ENCODE measurements at regions of chr1 and their contacts with region 1.

Region 1: DNA sequence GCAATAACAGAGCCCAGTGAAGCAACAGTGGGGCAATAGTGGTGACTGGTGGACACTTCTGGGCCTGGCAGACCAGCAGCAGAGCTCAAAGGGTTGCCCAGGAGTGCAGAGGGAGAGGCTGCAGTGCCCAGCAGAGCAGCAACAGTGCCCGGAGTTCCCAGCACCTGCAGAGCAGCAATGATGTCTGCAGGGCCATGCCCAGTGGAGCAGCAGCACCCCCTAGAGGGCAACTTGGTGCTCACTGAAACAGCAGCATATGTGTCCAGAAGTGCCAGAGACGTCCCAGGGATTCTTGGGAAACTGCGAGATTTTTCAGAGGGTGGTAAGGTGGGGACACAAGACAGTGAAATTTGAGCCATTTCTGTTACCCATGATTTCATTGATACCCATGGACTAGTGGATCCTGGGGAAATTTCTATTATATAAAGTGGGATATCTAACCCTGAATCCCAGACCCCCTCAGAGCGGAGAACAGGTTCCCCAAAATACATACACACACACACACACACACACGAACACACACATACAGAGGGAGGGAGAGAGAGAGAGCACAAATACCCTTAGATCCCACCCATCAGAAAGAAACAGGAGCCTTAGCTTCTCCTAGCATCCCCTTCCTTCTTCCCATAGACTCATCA is 156.9 kb upstream of the GJB5 start:
- DNase-seq: peak; percentile 92
- H3K4me3 Mint-ChIP-seq: no peak overlapping the region
- H3K27ac Mint-ChIP-seq: no peak overlapping the region
- H3K4me1 Mint-ChIP-seq: no peaks in the 10 kb centered on the region
- H3K27me3 Mint-ChIP-seq: peaks cover 72% of the 10 kb centered on the region
- CTCF ChIP-seq: peak; percentile 89

Region 2: DNA sequence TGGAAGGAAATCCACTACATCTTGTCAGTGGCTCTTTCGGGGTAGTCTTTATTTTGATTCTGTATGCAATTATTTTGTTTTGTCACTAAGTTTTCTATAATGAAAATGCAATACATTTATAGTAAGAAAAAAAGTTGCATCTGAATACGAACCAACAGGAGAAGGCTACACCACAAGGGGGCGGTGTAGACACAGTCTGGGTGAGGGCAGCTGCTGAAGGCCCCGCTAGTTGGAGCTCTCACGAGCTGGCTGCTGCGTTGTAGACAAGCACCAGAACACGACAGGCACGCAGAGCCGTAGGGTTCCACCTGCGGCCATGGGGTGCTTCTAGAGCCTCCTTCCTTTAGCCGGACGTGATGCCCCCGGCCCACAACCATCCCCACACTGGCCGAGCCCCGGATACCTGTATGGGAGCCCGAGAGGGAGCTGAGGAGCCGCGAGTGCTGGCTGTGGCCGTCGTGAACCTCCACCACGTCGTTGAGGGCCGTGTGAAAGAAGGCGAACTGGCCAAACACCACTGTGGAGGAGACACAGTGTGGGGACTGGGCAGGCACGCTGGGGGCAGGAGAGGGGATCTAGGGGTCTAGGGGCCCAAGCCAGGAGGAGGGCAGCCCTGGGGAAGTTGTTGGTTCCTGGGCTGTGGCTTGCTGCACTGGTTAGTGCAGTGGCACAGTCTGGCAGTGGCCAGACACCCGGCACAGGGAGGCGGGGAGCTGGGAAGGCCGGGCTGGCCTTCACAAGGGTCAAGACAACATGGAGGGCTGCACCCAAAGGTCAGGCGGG is 964.8 kb before region 1 on chr1:
- CTCF ChIA-PET with region 1: interaction called, 3 read pairs
- intact Hi-C with region 1: loop called (anchors 2 kb)
- DNase-seq: peak; percentile 93
- H3K4me3 Mint-ChIP-seq: peak overlapping the region; percentile 38
- H3K27ac Mint-ChIP-seq: no peak overlapping the region
- H3K4me1 Mint-ChIP-seq: no peaks in the 10 kb centered on the region
- H3K27me3 Mint-ChIP-seq: peaks cover 84% of the 10 kb centered on the region
- CTCF ChIP-seq: peak; percentile 92

Region 3: GRCh38 chr1:34113887-34114286 is 484.1 kb before region 1 on chr1:
- CTCF ChIA-PET with region 1: no interaction called
- intact Hi-C with region 1: loop called (anchors 5 kb)
- DNase-seq: peak; percentile 4
- H3K4me3 Mint-ChIP-seq: no peak overlapping the region
- H3K27ac Mint-ChIP-seq: no peak overlapping the region
- H3K4me1 Mint-ChIP-seq: no peaks in the 10 kb centered on the region
- H3K27me3 Mint-ChIP-seq: no peaks in the 10 kb centered on the region
- CTCF ChIP-seq: no peak

Region 4: DNA sequence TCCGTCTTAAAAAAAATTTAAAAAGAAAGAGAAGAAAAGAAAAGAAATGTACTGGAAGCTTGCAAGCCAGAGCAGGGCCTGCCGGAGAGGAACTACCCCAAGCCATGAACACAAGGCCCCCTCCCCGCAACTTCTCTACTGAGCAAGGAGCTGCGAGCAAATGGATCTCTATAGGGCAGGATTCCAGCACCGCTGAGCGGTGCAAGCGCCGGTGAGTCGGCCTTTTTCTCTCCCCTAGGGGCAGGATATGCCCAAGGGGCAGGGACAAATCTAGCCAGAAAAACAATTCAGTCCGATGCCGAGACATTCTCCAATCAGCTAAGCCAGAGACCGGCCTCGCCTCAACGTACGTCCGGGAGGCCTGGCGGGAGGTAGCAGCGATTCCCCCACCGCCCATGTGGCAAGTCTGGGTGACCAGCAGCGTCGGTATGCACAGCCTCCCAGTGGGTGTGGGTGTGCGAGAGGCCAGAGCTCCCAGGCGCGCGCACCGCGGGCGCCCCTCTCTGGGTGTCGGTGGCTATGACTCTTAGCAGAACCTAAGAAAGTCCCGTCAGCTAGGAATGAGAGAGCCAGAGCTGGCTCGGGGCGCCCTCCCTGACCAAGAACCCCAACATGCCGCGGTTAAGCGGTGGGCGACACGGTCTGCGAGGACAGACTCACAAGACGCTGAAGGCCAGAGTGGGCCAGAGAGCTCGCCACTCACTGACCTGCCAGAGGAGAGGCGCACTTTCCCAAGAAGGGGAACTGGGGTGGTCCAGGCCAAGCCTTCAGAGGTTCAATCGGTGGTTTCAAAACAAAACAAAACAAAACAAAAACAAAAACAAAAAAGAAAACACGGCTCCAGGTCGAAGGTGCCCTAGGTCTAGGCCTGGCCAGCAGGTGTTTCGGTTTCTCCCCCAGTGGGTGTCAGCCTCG is 434.9 kb before region 1 on chr1:
- CTCF ChIA-PET with region 1: no interaction called
- intact Hi-C with region 1: loop called (anchors 2 kb)
- DNase-seq: peak; percentile 77
- H3K4me3 Mint-ChIP-seq: peak overlapping the region; percentile 61
- H3K27ac Mint-ChIP-seq: no peak overlapping the region
- H3K4me1 Mint-ChIP-seq: no peaks in the 10 kb centered on the region
- H3K27me3 Mint-ChIP-seq: peaks cover 90% of the 10 kb centered on the region
- CTCF ChIP-seq: no peak

Region 5: DNA sequence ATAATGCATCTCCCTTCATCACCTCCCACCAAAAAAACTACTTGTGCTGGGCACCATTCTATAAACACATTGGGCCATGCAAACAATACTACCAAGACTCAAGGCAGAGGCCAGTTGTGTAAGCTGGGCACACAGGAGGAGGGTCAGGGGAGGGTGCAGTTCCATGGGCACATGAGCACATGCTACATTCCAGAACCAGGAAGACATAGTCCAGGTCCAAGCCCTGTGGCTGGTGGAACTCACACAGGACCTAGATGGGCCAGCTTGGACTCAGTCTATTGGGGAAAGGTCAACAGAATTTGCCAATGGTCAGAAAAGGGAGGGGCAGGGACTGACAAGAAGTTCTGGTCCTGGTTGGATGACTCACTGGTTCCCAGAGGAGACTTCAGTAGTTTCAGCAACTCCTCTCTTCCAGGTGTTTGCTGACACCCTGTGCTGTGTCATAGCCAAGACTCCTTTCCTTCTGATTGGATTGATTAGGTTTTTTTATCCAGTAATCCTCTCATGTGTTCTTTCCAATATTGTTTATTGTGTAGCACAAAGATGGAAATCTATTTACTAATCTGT is 171.6 kb before region 1 on chr1:
- CTCF ChIA-PET with region 1: no interaction called
- intact Hi-C with region 1: no loop called
- DNase-seq: no peak
- H3K4me3 Mint-ChIP-seq: no peak overlapping the region
- H3K27ac Mint-ChIP-seq: no peak overlapping the region
- H3K4me1 Mint-ChIP-seq: no peaks in the 10 kb centered on the region
- H3K27me3 Mint-ChIP-seq: peaks cover 29% of the 10 kb centered on the region
- CTCF ChIP-seq: no peak

Region 6: GRCh38 chr1:34460193-34460592 is 137.8 kb before region 1 on chr1:
- CTCF ChIA-PET with region 1: no interaction called
- intact Hi-C with region 1: loop called (anchors 1 kb)
- DNase-seq: peak; percentile 67
- H3K4me3 Mint-ChIP-seq: no peak overlapping the region
- H3K27ac Mint-ChIP-seq: no peak overlapping the region
- H3K4me1 Mint-ChIP-seq: no peaks in the 10 kb centered on the region
- H3K27me3 Mint-ChIP-seq: peaks cover 40% of the 10 kb centered on the region
- CTCF ChIP-seq: peak; percentile 78

Region 7: GRCh38 chr1:34549199-34549598 is 48.8 kb before region 1 on chr1:
- CTCF ChIA-PET with region 1: no interaction called
- intact Hi-C with region 1: loop called (anchors 1 kb)
- DNase-seq: peak; percentile 76
- H3K4me3 Mint-ChIP-seq: no peak overlapping the region
- H3K27ac Mint-ChIP-seq: no peak overlapping the region
- H3K4me1 Mint-ChIP-seq: no peaks in the 10 kb centered on the region
- H3K27me3 Mint-ChIP-seq: peaks cover 26% of the 10 kb centered on the region
- CTCF ChIP-seq: peak; percentile 30